A673 (cell line): ENCODE measurements at regions of chr16 and their contacts with region 1.

Region 1: DNA sequence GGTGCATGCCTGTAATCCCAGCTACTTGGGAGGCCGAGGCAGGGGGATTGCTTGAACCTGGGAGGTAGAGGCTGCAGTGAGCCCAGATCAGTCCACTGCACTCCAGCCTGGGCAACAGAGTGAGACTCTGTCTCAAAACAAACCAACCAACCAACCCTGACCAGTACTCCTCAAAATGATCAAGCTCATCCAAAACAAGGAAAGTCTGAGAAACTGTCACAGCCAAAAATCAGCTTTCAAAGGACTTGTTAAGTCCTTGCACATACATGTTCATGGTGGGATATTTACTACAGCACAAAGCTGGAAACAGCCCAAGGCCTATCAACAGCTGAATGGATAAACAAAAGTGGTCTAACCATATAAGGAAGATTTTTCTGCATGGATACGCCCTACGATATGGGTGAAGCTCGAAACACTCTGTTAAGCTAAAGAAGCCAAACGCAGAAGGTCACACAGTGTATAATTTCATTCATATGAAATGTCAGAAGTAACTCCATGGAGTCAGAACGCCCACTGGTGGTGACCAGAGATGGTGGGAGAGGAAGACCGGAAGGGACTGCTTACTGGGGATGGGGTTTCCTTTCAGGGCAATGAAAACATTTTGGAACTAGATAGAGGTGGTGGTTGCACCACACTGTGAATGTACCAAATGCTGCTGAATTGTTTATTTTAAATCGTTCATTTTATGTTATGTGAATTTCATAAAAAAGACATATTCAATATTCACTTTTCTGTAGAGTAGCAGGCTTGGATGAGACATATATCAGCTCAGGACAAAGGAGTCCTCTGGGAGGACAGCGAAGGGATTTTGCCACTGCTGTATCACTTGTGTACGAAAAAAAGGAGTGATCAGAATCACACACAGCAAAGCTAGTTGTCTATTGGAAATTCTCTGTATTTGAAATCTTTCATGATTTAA is 17.7 kb downstream of the CCL17 start:
- DNase-seq: peak; percentile 68
- H3K4me3 ChIP-seq: no peak overlapping the region
- H3K27ac ChIP-seq: no peak overlapping the region
- H3K4me1 ChIP-seq: peaks cover 3% of the 10 kb centered on the region
- H3K27me3 ChIP-seq: no peaks in the 10 kb centered on the region
- CTCF ChIP-seq: peak; percentile 67

Region 2: DNA sequence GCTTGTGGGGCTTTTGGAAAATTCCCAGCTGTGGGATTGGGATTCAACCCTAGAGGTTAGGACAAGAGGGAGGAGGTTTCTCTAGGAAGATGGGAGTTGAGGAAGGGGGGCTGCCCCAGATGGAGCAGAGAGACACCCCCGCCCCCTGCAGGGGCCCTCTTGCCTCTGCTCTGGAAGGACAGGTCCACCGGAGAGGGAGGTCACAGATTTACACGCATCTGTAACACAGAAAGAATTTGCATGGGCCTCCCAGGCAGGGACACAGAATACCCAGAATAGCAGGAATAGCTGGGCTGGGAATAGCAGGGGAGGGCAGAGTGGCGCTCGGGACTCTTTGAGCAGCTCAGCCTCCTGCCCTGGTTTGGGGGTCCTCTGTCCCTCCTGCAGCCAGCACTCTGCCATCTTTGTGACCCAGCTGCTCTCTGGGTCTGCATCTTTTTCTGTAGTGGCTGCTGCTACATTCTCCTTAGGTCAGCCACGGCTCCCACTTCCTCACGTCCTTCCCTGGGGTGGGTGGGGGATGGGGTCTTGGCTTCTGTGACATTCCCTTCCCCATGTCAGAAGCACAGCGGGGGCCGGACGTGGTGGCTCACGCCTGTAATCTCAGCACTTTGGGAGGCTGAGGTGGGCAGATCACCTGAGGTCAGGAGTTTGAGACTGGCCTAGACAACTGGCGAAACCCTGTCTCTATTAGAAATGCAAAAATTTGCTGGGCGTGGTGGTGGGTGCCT is 103.9 kb before region 1 on chr16:
- CTCF ChIA-PET with region 1: interaction called, 14 read pairs
- POLR2A ChIA-PET with region 1: no interaction called
- intact Hi-C with region 1: no loop called
- DNase-seq: no peak
- H3K4me3 ChIP-seq: no peak overlapping the region
- H3K27ac ChIP-seq: no peak overlapping the region
- H3K4me1 ChIP-seq: no peaks in the 10 kb centered on the region
- H3K27me3 ChIP-seq: no peaks in the 10 kb centered on the region
- CTCF ChIP-seq: no peak

Region 3: GRCh38 chr16:57462209-57462977 is 40.1 kb after region 1 on chr16 and contains the start of gene POLR2C:
- CTCF ChIA-PET with region 1: no interaction called
- POLR2A ChIA-PET with region 1: no interaction called
- intact Hi-C with region 1: no loop called
- DNase-seq: peak; percentile 92
- H3K4me3 ChIP-seq: peak within 1 kb of the TSS; percentile 93
- H3K27ac ChIP-seq: peak within 1 kb of the TSS; percentile 73
- H3K4me1 ChIP-seq: no peaks in the 10 kb centered on the region
- H3K27me3 ChIP-seq: no peaks in the 10 kb centered on the region
- CTCF ChIP-seq: peak; percentile 98
- total RNA-seq, gene POLR2C: 96.2 and 110 TPM in 2 replicates

Region 4: DNA sequence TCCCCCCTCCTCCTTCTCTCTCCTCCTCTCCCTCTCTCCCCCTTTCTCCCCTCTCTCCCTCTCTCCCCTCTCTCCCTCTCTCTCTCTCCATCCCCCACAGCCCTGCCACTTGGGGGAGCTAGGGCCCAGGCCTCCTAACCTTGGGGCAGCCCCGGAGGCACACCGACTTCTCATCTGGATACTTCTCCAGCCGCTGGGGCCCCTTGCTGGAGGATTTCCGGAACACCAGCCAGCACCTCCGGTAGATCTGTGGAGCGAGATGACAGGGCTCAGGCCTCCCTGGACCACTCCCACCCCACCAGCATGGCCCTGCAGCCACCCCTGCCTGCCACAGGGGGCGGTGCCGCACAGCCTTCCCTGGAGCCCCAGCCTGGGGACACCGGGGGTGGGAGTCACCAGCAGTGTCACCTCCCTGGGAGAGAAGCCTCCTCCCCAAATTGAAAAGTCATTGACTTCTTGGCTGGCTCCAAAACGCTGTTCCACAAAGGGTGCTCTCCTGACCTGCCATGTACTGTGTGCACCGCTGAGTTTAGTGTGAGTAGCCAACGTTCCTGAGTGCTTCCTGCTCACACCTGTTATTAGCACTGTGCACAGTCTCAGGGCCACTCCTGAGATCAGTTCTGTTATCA is 53.5 kb after region 1 on chr16:
- CTCF ChIA-PET with region 1: no interaction called
- POLR2A ChIA-PET with region 1: no interaction called
- intact Hi-C with region 1: no loop called
- DNase-seq: peak; percentile 49
- H3K4me3 ChIP-seq: no peak overlapping the region
- H3K27ac ChIP-seq: no peak overlapping the region
- H3K4me1 ChIP-seq: peaks cover 32% of the 10 kb centered on the region
- H3K27me3 ChIP-seq: no peaks in the 10 kb centered on the region
- CTCF ChIP-seq: peak; percentile 51

Region 5: GRCh38 chr16:57507136-57508034 is 85.1 kb after region 1 on chr16:
- CTCF ChIA-PET with region 1: no interaction called
- POLR2A ChIA-PET with region 1: interaction called, 14 read pairs
- intact Hi-C with region 1: no loop called
- DNase-seq: no peak
- H3K4me3 ChIP-seq: no peak overlapping the region
- H3K27ac ChIP-seq: no peak overlapping the region
- H3K4me1 ChIP-seq: no peaks in the 10 kb centered on the region
- H3K27me3 ChIP-seq: no peaks in the 10 kb centered on the region
- CTCF ChIP-seq: no peak

Region 6: GRCh38 chr16:57519796-57520360 is 97.6 kb after region 1 on chr16:
- CTCF ChIA-PET with region 1: interaction called, 10 read pairs
- POLR2A ChIA-PET with region 1: no interaction called
- intact Hi-C with region 1: loop called (anchors 2 kb)
- DNase-seq: peak; percentile 80
- H3K4me3 ChIP-seq: no peak overlapping the region
- H3K27ac ChIP-seq: no peak overlapping the region
- H3K4me1 ChIP-seq: no peaks in the 10 kb centered on the region
- H3K27me3 ChIP-seq: no peaks in the 10 kb centered on the region
- CTCF ChIP-seq: peak; percentile 98